ENCODE measurements at regions of chr2 and their contacts with region 1.

Region 1: GRCh38 chr2:28594289-28595108 is 98.6 kb downstream of the PLB1 start:
- DNase-seq: peak; percentile 93
- ATAC-seq: peak; percentile 90
- H3K4me3 Mint-ChIP-seq: peak overlapping the region; percentile 39
- H3K27ac Mint-ChIP-seq: peak overlapping the region; percentile 75
- H3K4me1 Mint-ChIP-seq: peaks cover 18% of the 10 kb centered on the region
- H3K27me3 Mint-ChIP-seq: no peaks in the 10 kb centered on the region

Region 2: GRCh38 chr2:28445448-28446258 is 148.8 kb before region 1 on chr2:
- CTCF ChIA-PET with region 1: no interaction called
- POLR2A ChIA-PET with region 1: no interaction called
- intact Hi-C with region 1: no loop called
- DNase-seq: peak; percentile 85
- ATAC-seq: peak; percentile 70
- H3K4me3 Mint-ChIP-seq: peak overlapping the region; percentile 53
- H3K27ac Mint-ChIP-seq: peak overlapping the region; percentile 97
- H3K4me1 Mint-ChIP-seq: peaks cover 81% of the 10 kb centered on the region
- H3K27me3 Mint-ChIP-seq: no peaks in the 10 kb centered on the region

Region 3: GRCh38 chr2:28507806-28508764 is 86.4 kb before region 1 on chr2:
- CTCF ChIA-PET with region 1: no interaction called
- POLR2A ChIA-PET with region 1: no interaction called
- intact Hi-C with region 1: no loop called
- DNase-seq: peak; percentile 62
- ATAC-seq: peak; percentile 98
- H3K4me3 Mint-ChIP-seq: no peak overlapping the region
- H3K27ac Mint-ChIP-seq: no peak overlapping the region
- H3K4me1 Mint-ChIP-seq: peaks cover 16% of the 10 kb centered on the region
- H3K27me3 Mint-ChIP-seq: peaks cover 8% of the 10 kb centered on the region

Region 4: DNA sequence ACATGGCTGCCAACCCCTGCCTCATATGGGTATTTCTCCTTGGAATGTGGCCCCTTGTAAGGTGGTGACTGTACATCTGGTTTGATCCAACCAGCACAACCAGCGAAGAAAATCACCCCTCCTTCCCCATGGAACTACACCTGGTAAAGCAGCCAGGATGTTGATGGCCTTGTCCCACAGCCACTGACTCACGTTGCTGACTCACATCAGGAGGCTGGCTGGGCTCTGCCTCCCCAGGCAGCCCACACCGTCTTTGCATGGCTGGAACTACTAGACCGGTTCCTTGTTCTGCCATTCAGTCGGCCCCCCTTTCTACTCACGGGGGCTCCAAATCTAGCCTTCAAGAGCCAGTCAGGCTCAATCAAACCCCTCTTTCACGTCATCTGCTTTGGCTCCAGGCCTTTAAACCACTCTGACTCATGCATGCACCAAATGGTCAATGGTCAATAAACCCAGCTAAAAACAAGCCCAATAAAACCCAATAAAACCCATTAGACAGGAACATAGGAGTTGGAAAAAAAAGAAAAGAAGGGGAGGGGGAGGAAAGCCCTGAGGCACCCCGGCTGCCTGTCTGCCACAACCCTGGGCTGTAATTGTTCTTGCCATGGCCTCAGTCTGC is 16.2 kb after region 1 on chr2:
- CTCF ChIA-PET with region 1: interaction called, 55 read pairs
- POLR2A ChIA-PET with region 1: no interaction called
- intact Hi-C with region 1: loop called in 1 of 2 experiments (anchors 2 kb)
- DNase-seq: peak; percentile 76
- ATAC-seq: peak; percentile 71
- H3K4me3 Mint-ChIP-seq: no peak overlapping the region
- H3K27ac Mint-ChIP-seq: peak overlapping the region; percentile 9
- H3K4me1 Mint-ChIP-seq: peaks cover 25% of the 10 kb centered on the region
- H3K27me3 Mint-ChIP-seq: no peaks in the 10 kb centered on the region

Region 5: DNA sequence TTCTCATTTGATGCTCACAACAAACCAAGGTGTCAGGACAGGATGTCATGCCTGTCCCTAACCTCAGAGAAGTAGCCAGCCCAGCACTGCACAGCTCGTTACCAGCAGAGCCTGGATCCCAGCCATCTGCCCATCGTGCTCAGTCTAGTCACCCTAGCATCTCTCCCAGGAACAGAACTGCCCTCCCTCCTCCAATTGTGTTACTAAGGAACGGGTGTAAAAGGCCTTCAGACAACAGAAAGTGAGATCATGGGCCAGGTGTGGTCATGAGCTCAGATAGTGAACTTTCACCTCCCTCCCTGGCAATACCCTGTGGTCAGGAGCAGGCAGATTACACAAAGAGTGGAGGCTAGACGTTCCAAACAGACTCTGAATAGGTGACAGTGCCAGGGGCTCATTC is 45.3 kb after region 1 on chr2:
- CTCF ChIA-PET with region 1: interaction called, 10 read pairs
- POLR2A ChIA-PET with region 1: no interaction called
- intact Hi-C with region 1: no loop called
- DNase-seq: no peak
- ATAC-seq: peak; percentile 75
- H3K4me3 Mint-ChIP-seq: no peak overlapping the region
- H3K27ac Mint-ChIP-seq: no peak overlapping the region
- H3K4me1 Mint-ChIP-seq: peaks cover 5% of the 10 kb centered on the region
- H3K27me3 Mint-ChIP-seq: no peaks in the 10 kb centered on the region

Region 6: GRCh38 chr2:28761420-28761819 is 166.9 kb after region 1 on chr2:
- CTCF ChIA-PET with region 1: interaction called, 43 read pairs
- POLR2A ChIA-PET with region 1: interaction called, 4 read pairs
- intact Hi-C with region 1: no loop called
- DNase-seq: no peak
- ATAC-seq: peak; percentile 59
- H3K4me3 Mint-ChIP-seq: no peak overlapping the region
- H3K27ac Mint-ChIP-seq: peak overlapping the region; percentile 58
- H3K4me1 Mint-ChIP-seq: peaks cover 78% of the 10 kb centered on the region
- H3K27me3 Mint-ChIP-seq: no peaks in the 10 kb centered on the region

Region 7: DNA sequence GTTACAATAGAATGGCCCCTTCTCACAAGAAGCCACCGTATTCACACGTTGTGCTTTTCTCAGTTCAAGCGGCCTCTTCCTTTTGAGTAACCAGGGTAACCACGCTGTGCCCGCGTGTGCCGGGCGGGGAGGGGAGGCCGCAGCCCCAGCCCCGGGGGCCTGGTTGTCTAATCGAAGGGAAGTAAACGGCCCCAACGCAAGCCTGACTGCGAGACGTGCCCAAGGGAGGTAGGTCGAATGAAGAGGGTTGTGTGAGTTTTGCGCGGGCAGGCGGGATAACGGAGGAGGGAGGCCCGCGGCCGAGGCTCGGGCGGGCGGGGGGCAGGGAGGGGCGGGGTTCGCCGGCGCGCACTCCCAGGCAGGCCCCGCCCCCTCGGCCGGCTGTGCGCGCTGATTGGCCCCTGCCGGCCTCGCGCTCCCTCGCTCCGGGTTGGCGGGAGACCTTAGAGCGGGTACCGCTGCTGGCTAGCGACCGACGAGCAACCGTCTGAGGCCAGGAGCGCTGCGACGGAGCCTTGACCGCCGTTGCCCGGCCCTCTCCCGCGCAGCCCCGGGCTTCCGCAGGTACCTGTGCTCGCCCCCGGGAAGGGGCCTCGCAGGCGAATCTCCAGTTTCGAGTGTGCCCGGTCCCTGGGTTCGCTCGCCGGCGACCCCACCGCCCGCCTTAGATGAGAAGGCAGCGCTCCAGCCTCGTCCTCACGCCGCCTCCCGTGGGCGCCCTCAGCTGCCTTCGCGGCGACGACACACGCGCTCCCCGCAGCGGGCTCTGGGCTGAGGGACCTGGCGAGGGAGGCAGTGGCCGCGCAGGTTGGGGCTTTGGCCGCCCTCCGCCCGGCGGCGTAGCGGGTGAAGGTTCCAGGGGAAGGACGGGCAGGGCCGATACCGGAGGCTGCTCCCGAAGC is 216.1 kb after region 1 on chr2 and contains the start of gene SPDYA:
- CTCF ChIA-PET with region 1: interaction called, 9 read pairs
- POLR2A ChIA-PET with region 1: no interaction called
- intact Hi-C with region 1: loop called (anchors 5 kb)
- DNase-seq: peak; percentile 90
- ATAC-seq: peak; percentile 95
- H3K4me3 Mint-ChIP-seq: peak within 1 kb of the TSS; percentile 59
- H3K27ac Mint-ChIP-seq: no peak within 1 kb of the TSS
- H3K4me1 Mint-ChIP-seq: peaks cover 14% of the 10 kb centered on the region
- H3K27me3 Mint-ChIP-seq: no peaks in the 10 kb centered on the region
- total RNA-seq, gene SPDYA: 0.93 to 1.2 TPM

Region 8: GRCh38 chr2:28894470-28895177 is 300.1 kb after region 1 on chr2 and contains the start of gene WDR43:
- CTCF ChIA-PET with region 1: interaction called, 5 read pairs
- POLR2A ChIA-PET with region 1: interaction called, 3 read pairs
- intact Hi-C with region 1: loop called in 1 of 2 experiments (anchors 1 kb)
- DNase-seq: peak; percentile 99
- ATAC-seq: peak; percentile 94
- H3K4me3 Mint-ChIP-seq: peak within 1 kb of the TSS; percentile 97
- H3K27ac Mint-ChIP-seq: peak within 1 kb of the TSS; percentile 95
- H3K4me1 Mint-ChIP-seq: peaks cover 32% of the 10 kb centered on the region
- H3K27me3 Mint-ChIP-seq: no peaks in the 10 kb centered on the region
- total RNA-seq, gene WDR43: 109 to 170 TPM